ENCODE measurements at regions of chr12 and their contacts with region 1.

Region 1: GRCh38 chr12:13905809-13906208 is 75.6 kb downstream of the GRIN2B start:
- DNase-seq: no peak
- H3K4me3 ChIP-seq: no peak overlapping the region
- H3K27ac ChIP-seq: no peak overlapping the region
- H3K4me1 ChIP-seq: peaks cover 0 to 6% (median 3%) of the 10 kb centered on the region in 4 donors
- H3K27me3 ChIP-seq: no peaks in the 10 kb centered on the region
- CTCF ChIP-seq: no peak
- EP300 ChIP-seq: no peak
- POLR2A ChIP-seq: no peak

Region 2: DNA sequence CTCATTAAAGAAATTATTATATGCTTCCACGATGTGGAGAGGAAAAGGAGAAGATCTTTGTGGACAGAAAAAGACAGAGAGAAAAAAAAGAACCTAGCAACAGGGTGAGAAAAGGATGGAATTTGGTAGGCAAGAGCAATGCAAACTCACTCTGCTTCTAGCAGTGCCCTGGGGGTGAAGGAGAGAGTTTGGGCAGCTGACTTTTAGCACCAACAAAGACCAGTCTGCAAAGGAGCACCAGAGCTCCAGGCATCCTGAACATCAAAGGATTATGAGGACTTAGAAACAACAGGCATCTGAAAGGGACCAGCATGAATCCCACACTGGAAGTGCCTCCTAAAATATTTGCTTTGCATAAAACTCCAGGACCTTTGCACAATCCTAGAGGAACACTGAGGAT is 1348.2 kb after region 1 on chr12:
- in situ Hi-C with region 1: no loop called
- intact Hi-C with region 1: loop called (anchors 5 kb)
- DNase-seq: no peak
- H3K4me3 ChIP-seq: no peak overlapping the region
- H3K27ac ChIP-seq: no peak overlapping the region
- H3K4me1 ChIP-seq: no peaks in the 10 kb centered on the region
- H3K27me3 ChIP-seq: peaks cover 6% of the 10 kb centered on the region
- CTCF ChIP-seq: no peak
- EP300 ChIP-seq: no peak
- POLR2A ChIP-seq: no peak

Measured in transverse colon (tissue), 4 donors.